ENCODE measurements at regions of chr20 and their contacts with region 1.

Region 1: DNA sequence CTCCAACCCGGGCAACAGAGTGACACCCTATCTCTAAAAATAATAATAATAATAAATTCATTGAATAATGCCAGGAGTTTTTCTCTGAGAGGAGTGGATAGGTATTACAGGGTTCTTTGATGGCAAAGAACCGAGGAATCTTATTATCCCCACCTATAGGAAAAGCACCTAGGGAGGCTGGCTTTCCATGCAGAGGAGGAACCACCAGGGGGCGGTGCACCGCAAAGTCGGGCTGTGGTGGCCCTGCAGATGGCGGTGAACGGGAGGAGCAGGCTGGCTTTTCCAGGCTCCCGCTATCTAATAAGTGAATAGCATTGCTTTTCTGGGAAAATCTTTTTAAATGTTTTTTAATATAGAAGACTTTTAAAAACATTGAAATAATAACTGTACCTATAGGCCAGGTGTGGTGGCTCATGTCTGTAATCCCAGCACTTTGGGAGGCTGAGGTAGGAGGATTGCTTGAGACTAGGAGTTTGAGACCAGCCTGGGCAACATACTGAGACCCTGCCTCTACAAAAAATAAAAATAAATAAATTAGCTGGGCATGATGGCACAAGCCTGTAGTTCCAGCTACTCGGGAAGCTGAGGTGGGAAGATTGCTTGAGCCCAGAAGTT is 864.2 kb downstream of the KIF16B start:
- DNase-seq: peak in 1 of 3 donors; percentile 16
- H3K4me3 ChIP-seq: no peak overlapping the region
- H3K4me3 Mint-ChIP-seq: no peak overlapping the region
- H3K27ac ChIP-seq: no peak overlapping the region
- H3K27ac Mint-ChIP-seq: no peak overlapping the region
- H3K4me1 ChIP-seq: no peaks in the 10 kb centered on the region
- H3K4me1 Mint-ChIP-seq: no peaks in the 10 kb centered on the region
- H3K27me3 ChIP-seq: no peaks in the 10 kb centered on the region
- H3K27me3 Mint-ChIP-seq: peaks cover 0 to 2% (median 0%) of the 10 kb centered on the region in 3 donors
- CTCF ChIP-seq: peak; percentile 66

Region 2: DNA sequence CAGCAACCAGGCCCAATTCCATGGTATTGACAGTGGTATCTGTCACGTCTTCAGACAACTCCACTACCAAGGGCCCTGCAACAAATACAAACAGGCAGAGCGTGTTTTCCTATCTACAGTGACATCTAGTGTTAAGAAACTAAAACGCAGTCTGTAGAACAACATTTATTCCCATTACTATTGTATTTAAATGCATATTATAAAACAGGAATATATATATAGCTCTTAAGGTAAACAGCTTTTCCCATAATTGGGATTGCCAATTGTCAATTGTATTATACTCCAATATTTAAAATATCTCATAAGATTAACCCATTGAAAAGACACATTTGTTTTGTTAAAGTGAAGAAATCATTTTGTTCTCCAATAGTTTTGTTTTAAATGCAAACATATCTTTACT is 766.9 kb after region 1 on chr20:
- intact Hi-C with region 1: loop called (anchors 5 kb)
- DNase-seq: peak; percentile 7 to 48 (median 25)
- H3K4me3 ChIP-seq: no peak overlapping the region
- H3K4me3 Mint-ChIP-seq: no peak overlapping the region
- H3K27ac ChIP-seq: no peak overlapping the region
- H3K27ac Mint-ChIP-seq: no peak overlapping the region
- H3K4me1 ChIP-seq: peaks cover 4 to 9% of the 10 kb centered on the region in 2 donors
- H3K4me1 Mint-ChIP-seq: peaks cover 9% of the 10 kb centered on the region
- H3K27me3 ChIP-seq: no peaks in the 10 kb centered on the region
- H3K27me3 Mint-ChIP-seq: peaks cover 0 to 1% (median 0%) of the 10 kb centered on the region in 3 donors
- CTCF ChIP-seq: peak; percentile 83

Region 3: GRCh38 chr20:16761305-16761829 is 1052.3 kb after region 1 on chr20:
- intact Hi-C with region 1: loop called in 1 of 2 experiments (anchors 5 kb)
- DNase-seq: peak; percentile 25 to 46 (median 42)
- H3K4me3 ChIP-seq: no peak overlapping the region
- H3K4me3 Mint-ChIP-seq: no peak overlapping the region
- H3K27ac ChIP-seq: no peak overlapping the region
- H3K27ac Mint-ChIP-seq: no peak overlapping the region
- H3K4me1 ChIP-seq: peaks cover 0 to 10% of the 10 kb centered on the region in 2 donors
- H3K4me1 Mint-ChIP-seq: peaks cover 14% of the 10 kb centered on the region
- H3K27me3 ChIP-seq: peaks cover 0 to 3% of the 10 kb centered on the region in 2 donors
- H3K27me3 Mint-ChIP-seq: peaks cover 2 to 6% (median 2%) of the 10 kb centered on the region in 3 donors
- CTCF ChIP-seq: peak; percentile 72

Measured in CD14-positive monocyte (primary cell).